ENCODE measurements at regions of chr12 and their contacts with region 1.

Region 1: DNA sequence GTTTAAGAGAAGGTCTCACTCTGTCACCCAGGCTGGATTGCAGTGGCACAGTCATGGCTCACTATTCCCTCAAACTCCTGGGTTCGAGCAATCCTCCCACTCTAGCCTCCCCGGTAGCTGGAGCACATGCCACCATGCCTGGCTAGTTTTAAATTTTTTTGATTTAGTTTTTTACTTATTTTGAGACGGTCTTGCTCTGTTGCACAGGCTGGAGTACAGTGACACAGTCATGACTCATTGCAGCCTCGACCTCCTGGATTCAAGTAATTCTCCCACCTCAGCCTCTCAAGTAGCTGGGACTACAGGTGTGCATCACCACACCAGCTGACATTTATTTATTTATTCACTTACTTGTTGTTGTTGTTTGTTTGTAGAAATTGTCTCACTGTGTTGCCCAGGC is 22.2 kb upstream of the DIP2B start:
- DNase-seq: no peak

Region 2: DNA sequence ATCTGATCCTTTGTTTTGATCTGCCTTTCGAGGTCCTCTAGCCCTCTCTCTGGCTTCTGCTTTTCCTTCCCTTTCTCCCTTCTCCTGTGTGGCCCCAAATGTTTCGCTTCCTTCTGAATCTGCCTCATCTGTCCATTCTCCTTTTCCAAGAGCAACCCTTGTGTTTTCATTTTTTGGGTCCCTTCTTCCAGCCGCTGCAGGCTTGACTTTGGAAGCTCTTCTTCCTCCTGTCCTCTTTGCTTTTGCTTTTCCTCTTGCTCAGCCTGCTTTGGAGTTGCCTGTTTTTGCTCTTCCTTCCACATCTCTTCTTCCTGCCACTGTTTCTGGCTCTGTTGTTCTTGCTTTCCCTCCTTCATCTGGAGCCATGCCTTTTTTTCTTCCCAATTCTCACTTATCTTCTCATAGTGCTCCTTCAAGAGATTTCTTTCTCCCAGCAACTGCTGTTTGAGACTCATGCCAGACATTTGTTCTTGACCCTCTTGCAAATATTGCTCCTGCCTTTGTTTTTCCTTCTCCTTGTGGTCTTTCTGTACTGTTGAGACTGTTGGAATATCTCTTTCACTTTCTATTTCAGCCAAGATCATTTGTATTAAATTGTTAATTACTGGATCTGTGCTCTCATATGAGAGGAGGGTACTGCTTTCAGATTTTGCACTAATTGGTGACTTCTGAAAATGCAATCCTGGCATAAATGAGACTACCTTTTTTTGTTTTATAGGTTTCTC is 128.5 kb before region 1 on chr12:
- in situ Hi-C with region 1: no loop called
- DNase-seq: peak; percentile 9

Region 3: GRCh38 chr12:50520416-50521207 is 38.0 kb after region 1 on chr12:
- in situ Hi-C with region 1: no loop called
- DNase-seq: no peak

Region 4: GRCh38 chr12:50734409-50735263 is 252.1 kb after region 1 on chr12:
- in situ Hi-C with region 1: loop called (anchors 25 kb)
- DNase-seq: peak; percentile 56

Region 5: DNA sequence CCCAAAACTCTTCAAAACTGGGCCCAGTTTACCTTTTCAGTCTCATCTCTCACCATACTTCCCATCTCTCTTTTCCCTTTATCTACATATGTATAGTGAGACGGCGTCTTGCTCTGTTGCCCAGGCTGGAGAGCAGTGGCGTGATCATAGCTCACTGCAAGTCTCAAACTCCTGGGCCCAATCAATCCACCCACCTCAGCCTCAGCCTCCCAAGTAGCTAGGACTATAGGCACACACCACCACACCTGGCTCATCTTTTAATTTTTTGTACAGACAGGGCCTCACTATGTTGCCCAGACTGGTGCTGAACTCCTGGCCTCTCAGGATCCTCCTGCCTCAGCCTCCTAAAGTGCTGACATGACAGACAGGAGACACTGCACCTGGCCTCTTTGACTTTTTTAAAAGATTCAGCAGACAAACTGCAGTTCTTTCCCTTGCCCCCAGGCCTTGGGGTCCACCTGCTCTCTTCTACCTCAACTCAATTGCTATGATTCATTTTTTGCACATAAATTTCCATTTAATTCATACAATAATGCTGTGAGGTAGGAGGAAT is 656.8 kb after region 1 on chr12:
- in situ Hi-C with region 1: no loop called
- DNase-seq: no peak

Measured in KBM-7 (cell line).